A549 (cell line): ENCODE measurements at regions of chr3 and their contacts with region 1.

Region 1: DNA sequence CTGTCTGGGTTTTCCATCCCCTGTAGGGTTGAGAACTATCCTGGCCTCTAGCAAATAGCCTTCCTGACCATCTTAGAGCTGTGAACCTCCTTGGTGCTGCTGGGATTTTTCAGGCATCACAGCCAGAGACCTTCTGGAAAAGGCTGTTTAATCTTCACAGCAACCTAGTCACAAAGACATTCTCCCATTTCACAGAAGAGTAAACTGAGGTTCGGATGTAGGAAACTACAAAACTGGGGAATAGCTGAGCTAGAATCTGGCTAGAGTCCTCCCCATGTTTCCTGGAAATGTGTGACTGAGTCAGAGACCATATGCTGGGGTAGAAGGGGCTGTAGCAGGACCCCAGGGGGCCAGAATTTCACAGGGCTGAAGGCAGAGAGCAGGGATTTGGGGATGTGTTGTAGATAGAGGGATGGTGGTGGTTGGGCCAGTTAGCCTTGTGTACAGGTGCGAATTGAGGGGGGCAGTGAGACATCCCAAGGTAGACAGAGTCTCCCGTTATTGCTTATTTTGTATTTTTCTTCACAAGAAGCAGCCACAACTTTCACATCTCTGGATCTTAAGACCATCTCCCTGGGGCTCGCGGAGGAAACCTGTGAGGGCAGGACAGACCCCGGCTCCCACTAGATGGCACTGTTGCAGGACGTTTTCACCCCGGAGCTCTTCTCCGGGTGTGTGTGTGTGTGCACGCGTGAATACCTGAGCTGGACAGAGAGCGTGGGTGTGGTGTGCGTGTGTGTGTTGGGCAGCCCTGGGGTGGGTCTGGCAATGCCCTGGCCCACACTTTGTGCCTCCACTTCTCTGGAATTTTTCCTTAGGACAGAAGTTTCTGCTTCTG is 66.9 kb upstream of the PRR23C start:
- DNase-seq: peak; percentile 43 to 50
- ATAC-seq: peak; percentile 94 to 95
- H3K4me3 ChIP-seq: no peak overlapping the region
- H3K27ac ChIP-seq: peak overlapping the region in 1 of 2 experiments; percentile 47; a peak in 2 of 6 replicates
- H3K4me1 ChIP-seq: no peaks in the 10 kb centered on the region
- CTCF ChIP-seq: peak; percentile 54
- EP300 ChIP-seq: no peak
- POLR2A ChIP-seq: no peak
- RAD21 ChIP-seq: peak; percentile 76

Region 2: GRCh38 chr3:139130390-139131140 is 19.0 kb after region 1 on chr3:
- CTCF ChIA-PET with region 1: interaction called, 12 read pairs
- POLR2A ChIA-PET with region 1: no interaction called
- DNase-seq: no peak
- ATAC-seq: no peak
- H3K4me3 ChIP-seq: no peak overlapping the region
- H3K27ac ChIP-seq: no peak overlapping the region
- H3K4me1 ChIP-seq: no peaks in the 10 kb centered on the region
- CTCF ChIP-seq: no peak
- EP300 ChIP-seq: no peak
- POLR2A ChIP-seq: no peak
- RAD21 ChIP-seq: no peak

Region 3: DNA sequence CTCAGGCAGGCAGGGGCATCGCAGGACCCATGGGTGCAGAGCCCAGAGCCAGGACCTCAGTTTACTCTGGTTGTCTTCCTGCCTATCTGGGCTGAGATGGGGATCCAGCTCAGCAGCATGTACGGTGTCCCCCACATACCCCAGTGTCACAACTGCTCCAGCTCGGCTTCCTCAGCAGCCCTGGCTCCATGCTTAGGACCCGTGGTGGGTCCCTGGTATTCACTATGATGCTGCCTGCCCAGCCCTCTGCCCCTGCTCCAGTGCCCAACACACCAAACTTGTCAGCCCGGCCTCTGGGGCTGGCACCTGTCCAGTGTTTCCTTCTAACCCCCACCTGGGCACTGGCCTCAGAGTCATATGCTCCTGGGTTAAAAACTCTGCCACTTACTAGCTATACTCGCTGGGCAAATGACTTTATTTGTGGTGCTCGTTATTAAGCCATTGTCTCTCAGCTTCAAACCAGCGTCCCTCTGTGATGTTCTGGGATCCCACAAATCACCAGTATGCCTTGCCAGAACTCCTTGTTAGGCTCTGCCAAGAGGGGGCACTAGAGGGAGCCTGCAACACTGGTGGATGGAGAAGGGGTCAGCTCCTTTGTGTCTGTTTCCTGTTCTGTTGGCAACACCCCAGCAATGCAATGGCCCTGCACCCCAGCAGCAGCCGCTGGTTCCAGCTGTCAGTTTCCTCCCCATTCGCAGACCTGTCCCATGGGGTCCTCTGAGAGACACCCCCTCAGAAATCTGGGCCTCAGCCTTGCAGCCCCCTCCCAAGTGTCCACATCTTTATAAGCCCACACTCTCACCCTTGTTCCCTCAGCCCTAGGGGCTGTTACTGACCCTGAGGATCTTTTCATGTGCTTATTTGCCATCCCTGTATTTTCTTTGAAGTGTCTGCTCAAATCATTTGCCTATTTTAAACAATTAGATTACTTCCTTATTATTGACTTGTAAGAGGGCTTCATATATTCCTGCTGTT is 208.1 kb after region 1 on chr3:
- CTCF ChIA-PET with region 1: interaction called, 55 read pairs
- POLR2A ChIA-PET with region 1: no interaction called
- DNase-seq: peak in 1 of 2 experiments; percentile 24
- ATAC-seq: peak; percentile 26 to 69; a peak in 3 of 6 replicates
- H3K4me3 ChIP-seq: no peak overlapping the region
- H3K27ac ChIP-seq: peak overlapping the region in 1 of 2 experiments; percentile 64; a peak in 2 of 6 replicates
- H3K4me1 ChIP-seq: peaks cover 17% of the 10 kb centered on the region
- CTCF ChIP-seq: no peak
- EP300 ChIP-seq: no peak
- POLR2A ChIP-seq: no peak
- RAD21 ChIP-seq: no peak

Region 4: DNA sequence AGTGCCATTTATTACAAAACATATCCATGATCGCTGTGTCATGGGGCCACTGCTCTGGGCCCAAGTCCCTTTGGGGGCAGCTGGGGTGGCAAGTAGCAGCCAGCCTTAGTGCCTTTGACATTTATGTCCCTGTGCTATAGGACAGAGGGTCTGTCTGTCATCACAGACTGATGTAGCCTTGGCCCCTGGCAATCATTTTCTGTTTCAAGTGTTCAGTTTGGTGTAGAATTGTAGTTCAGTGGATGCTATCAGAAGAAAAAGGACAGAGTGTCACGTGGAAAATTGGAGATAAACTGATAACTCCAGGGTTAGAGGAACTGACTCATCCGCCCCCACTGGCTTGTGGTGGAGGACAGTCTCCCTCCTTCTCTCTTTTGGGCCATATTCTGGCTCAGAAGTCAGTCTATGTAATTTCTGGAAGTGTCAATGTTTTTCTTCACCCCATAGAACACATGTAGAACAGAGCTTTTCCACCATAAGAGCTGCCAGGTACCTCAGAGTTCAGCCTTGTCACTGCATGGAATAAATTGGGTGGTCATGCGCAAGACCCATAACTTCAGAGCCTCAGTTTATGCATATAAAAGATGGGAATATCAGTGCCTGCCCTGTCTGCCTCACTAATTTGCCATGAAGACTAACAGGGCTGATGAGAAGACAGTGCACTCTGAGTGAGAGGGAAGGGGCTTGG is 227.8 kb after region 1 on chr3:
- CTCF ChIA-PET with region 1: interaction called, 11 read pairs
- POLR2A ChIA-PET with region 1: no interaction called
- DNase-seq: no peak
- ATAC-seq: no peak
- H3K4me3 ChIP-seq: no peak overlapping the region
- H3K27ac ChIP-seq: no peak overlapping the region
- H3K4me1 ChIP-seq: no peaks in the 10 kb centered on the region
- CTCF ChIP-seq: no peak
- EP300 ChIP-seq: no peak
- POLR2A ChIP-seq: no peak
- RAD21 ChIP-seq: no peak

Region 5: GRCh38 chr3:139361276-139361675 is 249.7 kb after region 1 on chr3:
- CTCF ChIA-PET with region 1: no interaction called
- POLR2A ChIA-PET with region 1: no interaction called
- DNase-seq: no peak
- ATAC-seq: no peak
- H3K4me3 ChIP-seq: no peak overlapping the region
- H3K27ac ChIP-seq: no peak overlapping the region
- H3K4me1 ChIP-seq: no peaks in the 10 kb centered on the region
- CTCF ChIP-seq: no peak
- EP300 ChIP-seq: no peak
- POLR2A ChIP-seq: no peak
- RAD21 ChIP-seq: no peak